CD4-positive, alpha-beta memory T cell (primary cell): ENCODE measurements at regions of chr12 and their contacts with region 1.

Region 1: DNA sequence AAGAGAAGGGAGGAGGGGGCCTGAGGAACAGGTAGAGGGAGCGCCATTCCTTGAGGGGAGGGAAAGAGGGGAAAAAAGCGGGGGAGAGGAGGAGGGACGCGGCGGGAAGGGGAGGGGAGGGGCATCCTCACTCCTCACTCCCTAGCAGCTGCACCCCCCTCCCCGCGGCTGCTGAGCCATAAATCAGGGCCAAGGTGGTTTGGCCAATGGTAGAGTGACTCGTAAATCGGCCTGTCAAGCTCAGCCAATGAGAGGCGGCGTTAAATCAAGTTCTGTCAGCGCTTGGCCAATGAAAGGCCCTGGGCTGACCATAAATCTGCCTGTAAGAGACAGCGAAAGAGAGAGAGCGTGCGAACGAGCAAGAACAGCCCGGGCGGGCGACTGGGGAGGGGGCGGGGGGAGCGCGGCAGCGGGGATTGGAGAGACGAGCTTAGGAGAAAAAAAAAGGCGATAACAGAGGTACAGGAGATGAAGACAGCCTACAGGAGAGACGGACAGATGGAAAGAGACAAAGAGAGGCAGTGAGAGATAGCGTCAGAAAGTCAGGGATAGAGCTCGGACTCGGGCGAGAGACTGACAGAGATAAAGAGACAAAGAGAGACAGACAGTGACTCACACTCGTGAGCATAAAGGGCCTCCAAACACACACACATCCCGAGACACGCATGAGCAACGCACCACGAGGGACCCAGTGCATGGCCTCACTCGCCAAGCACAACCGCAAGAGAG is 5.1 kb downstream of the GPR84 start:
- DNase-seq: peak; percentile 93 to 99 (median 95)
- H3K4me3 ChIP-seq: peak overlapping the region; percentile 87 to 91
- H3K4me3 Mint-ChIP-seq: no peak overlapping the region
- H3K27ac ChIP-seq: peak overlapping the region; percentile 95
- H3K27ac Mint-ChIP-seq: no peak overlapping the region
- H3K4me1 ChIP-seq: peaks cover 36% of the 10 kb centered on the region
- H3K4me1 Mint-ChIP-seq: peaks cover 10 to 19% (median 14%) of the 10 kb centered on the region in 4 donors
- H3K27me3 ChIP-seq: no peaks in the 10 kb centered on the region
- H3K27me3 Mint-ChIP-seq: no peaks in the 10 kb centered on the region

Region 2: GRCh38 chr12:53984901-53985709 is 374.1 kb before region 1 on chr12 and contains the start of gene HOXC10:
- CTCF ChIA-PET with region 1: interaction called, 3 read pairs
- POLR2A ChIA-PET with region 1: no interaction called
- intact Hi-C with region 1: loop called (anchors 10 kb)
- DNase-seq: peak in 4 of 5 donors; percentile 42 to 73 (median 45)
- H3K4me3 ChIP-seq: no peak within 1 kb of the TSS
- H3K4me3 Mint-ChIP-seq: peak within 1 kb of the TSS; percentile 48 to 88 (median 70)
- H3K27ac ChIP-seq: no peak within 1 kb of the TSS
- H3K27ac Mint-ChIP-seq: peak within 1 kb of the TSS in 5 of 7 donors; percentile 42 to 93 (median 75)
- H3K4me1 ChIP-seq: peaks cover 36% of the 10 kb centered on the region
- H3K4me1 Mint-ChIP-seq: peaks cover 15 to 57% (median 29%) of the 10 kb centered on the region in 4 donors
- H3K27me3 ChIP-seq: peaks cover 94% of the 10 kb centered on the region
- H3K27me3 Mint-ChIP-seq: peaks cover 76 to 82% of the 10 kb centered on the region in 2 donors
- total RNA-seq, gene HOXC10: not detected

Region 3: DNA sequence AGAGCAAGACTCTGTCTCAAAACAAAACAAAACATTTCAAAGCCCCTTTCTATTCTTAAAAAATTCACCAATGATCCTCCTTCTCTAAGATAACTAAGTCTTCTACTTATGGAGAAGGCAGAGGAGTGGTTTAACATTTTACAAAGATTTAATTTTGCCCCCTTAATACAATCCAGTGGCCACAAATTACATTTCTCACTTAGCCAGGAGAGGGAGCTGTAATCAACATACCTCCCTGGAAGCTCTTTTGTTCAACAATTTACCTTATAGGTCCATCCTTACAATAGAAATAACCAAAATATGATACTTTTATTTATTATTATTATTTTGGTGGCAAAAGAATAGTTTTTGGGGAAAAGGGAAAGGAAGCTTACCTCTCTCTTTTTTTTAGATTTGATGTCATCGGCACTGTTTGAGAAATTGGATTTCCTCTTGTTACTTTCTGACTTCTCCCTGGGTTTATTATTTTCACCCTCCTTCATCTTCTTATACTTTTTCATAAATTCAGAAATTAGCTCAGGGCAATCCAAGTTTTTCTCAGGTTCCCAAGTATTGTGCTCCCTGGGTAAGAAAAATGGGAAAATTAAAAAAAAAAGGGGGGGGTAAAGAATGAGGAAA is 107.4 kb before region 1 on chr12:
- CTCF ChIA-PET with region 1: interaction called, 75 read pairs
- POLR2A ChIA-PET with region 1: interaction called, 5 read pairs
- intact Hi-C with region 1: loop called (anchors 2 kb)
- DNase-seq: peak in 4 of 5 donors; percentile 36 to 52 (median 46)
- H3K4me3 ChIP-seq: no peak overlapping the region
- H3K4me3 Mint-ChIP-seq: no peak overlapping the region
- H3K27ac ChIP-seq: no peak overlapping the region
- H3K27ac Mint-ChIP-seq: peak overlapping the region in 1 of 7 donors; percentile 63
- H3K4me1 ChIP-seq: no peaks in the 10 kb centered on the region
- H3K4me1 Mint-ChIP-seq: peaks cover 4 to 9% (median 6%) of the 10 kb centered on the region in 4 donors
- H3K27me3 ChIP-seq: no peaks in the 10 kb centered on the region
- H3K27me3 Mint-ChIP-seq: no peaks in the 10 kb centered on the region

Region 4: GRCh38 chr12:54285150-54286041 is 73.8 kb before region 1 on chr12:
- CTCF ChIA-PET with region 1: interaction called, 110 read pairs
- POLR2A ChIA-PET with region 1: interaction called, 62 read pairs
- intact Hi-C with region 1: loop called (anchors 1 kb)
- DNase-seq: no peak
- H3K4me3 ChIP-seq: no peak overlapping the region
- H3K4me3 Mint-ChIP-seq: peak overlapping the region in 6 of 8 donors; percentile 29 to 63 (median 50)
- H3K27ac ChIP-seq: no peak overlapping the region
- H3K27ac Mint-ChIP-seq: peak overlapping the region in 6 of 7 donors; percentile 9 to 92 (median 64)
- H3K4me1 ChIP-seq: peaks cover 53% of the 10 kb centered on the region
- H3K4me1 Mint-ChIP-seq: peaks cover 0 to 37% (median 22%) of the 10 kb centered on the region in 4 donors
- H3K27me3 ChIP-seq: no peaks in the 10 kb centered on the region
- H3K27me3 Mint-ChIP-seq: no peaks in the 10 kb centered on the region

Region 5: DNA sequence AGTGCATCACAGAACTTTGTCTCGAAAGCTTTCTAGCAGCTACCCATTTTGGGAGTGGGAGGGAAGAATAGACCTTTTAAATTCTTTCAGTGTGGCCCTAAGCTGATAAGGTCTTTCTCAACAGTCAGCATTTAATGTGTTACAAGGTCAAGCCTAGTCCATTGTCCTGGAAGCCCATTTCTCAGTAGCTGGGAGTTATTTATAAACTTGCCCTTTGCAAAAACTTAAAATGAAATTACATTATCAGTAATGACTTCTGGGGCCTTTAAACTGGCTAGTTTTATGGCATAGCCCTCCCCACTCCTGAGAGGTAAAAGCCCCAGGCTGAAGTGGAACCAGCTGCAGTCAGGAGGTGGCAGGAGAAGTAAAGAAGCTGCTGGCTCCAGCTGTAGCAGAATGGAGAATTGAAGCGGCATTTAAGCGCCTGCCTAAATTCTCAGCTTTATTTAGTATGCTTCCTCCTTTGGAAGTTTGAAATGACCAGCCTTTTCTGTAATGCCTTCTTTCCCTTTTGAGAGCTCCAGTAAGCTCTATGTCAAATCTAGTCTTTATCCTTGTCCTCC is 21.8 kb before region 1 on chr12:
- CTCF ChIA-PET with region 1: interaction called, 67 read pairs
- POLR2A ChIA-PET with region 1: interaction called, 21 read pairs
- intact Hi-C with region 1: no loop called
- DNase-seq: no peak
- H3K4me3 ChIP-seq: no peak overlapping the region
- H3K4me3 Mint-ChIP-seq: no peak overlapping the region
- H3K27ac ChIP-seq: no peak overlapping the region
- H3K27ac Mint-ChIP-seq: peak overlapping the region in 3 of 7 donors; percentile 48 to 51 (median 48)
- H3K4me1 ChIP-seq: peaks cover 4% of the 10 kb centered on the region
- H3K4me1 Mint-ChIP-seq: peaks cover 6 to 29% (median 15%) of the 10 kb centered on the region in 4 donors
- H3K27me3 ChIP-seq: no peaks in the 10 kb centered on the region
- H3K27me3 Mint-ChIP-seq: no peaks in the 10 kb centered on the region

Region 6: GRCh38 chr12:54759751-54760150 is 400.6 kb after region 1 on chr12:
- CTCF ChIA-PET with region 1: no interaction called
- POLR2A ChIA-PET with region 1: no interaction called
- intact Hi-C with region 1: no loop called
- DNase-seq: peak in 1 of 5 donors; percentile 23
- H3K4me3 ChIP-seq: no peak overlapping the region
- H3K4me3 Mint-ChIP-seq: no peak overlapping the region
- H3K27ac ChIP-seq: no peak overlapping the region
- H3K27ac Mint-ChIP-seq: no peak overlapping the region
- H3K4me1 ChIP-seq: peaks cover 3% of the 10 kb centered on the region
- H3K4me1 Mint-ChIP-seq: peaks cover 0 to 6% (median under 1%) of the 10 kb centered on the region in 4 donors
- H3K27me3 ChIP-seq: no peaks in the 10 kb centered on the region
- H3K27me3 Mint-ChIP-seq: peaks cover 0 to 7% of the 10 kb centered on the region in 2 donors

Region 7: GRCh38 chr12:54853995-54854566 is 494.9 kb after region 1 on chr12 and contains the start of gene MUCL1:
- CTCF ChIA-PET with region 1: no interaction called
- POLR2A ChIA-PET with region 1: no interaction called
- intact Hi-C with region 1: no loop called
- DNase-seq: peak; percentile 67 to 74 (median 69)
- H3K4me3 ChIP-seq: no peak within 1 kb of the TSS
- H3K4me3 Mint-ChIP-seq: no peak within 1 kb of the TSS
- H3K27ac ChIP-seq: no peak within 1 kb of the TSS
- H3K27ac Mint-ChIP-seq: peak within 1 kb of the TSS in 1 of 7 donors; percentile 55
- H3K4me1 ChIP-seq: no peaks in the 10 kb centered on the region
- H3K4me1 Mint-ChIP-seq: no peaks in the 10 kb centered on the region
- H3K27me3 ChIP-seq: no peaks in the 10 kb centered on the region
- H3K27me3 Mint-ChIP-seq: no peaks in the 10 kb centered on the region
- total RNA-seq, gene MUCL1: not detected